OCI-LY7 (cell line): ENCODE measurements at regions of chr3 and their contacts with region 1.

Region 1: GRCh38 chr3:37974121-37975083 is 16.2 kb upstream of the VILL start:
- DNase-seq: peak; percentile 80
- H3K4me3 ChIP-seq: no peak overlapping the region
- H3K27ac ChIP-seq: no peak overlapping the region
- H3K4me1 ChIP-seq: no peaks in the 10 kb centered on the region
- CTCF ChIP-seq: peak; percentile 95

Region 2: GRCh38 chr3:38003371-38003816 is 29.0 kb after region 1 on chr3:
- CTCF ChIA-PET with region 1: no interaction called
- POLR2A ChIA-PET with region 1: no interaction called
- intact Hi-C with region 1: loop called (anchors 1 kb)
- DNase-seq: peak; percentile 54
- H3K4me3 ChIP-seq: no peak overlapping the region
- H3K27ac ChIP-seq: no peak overlapping the region
- H3K4me1 ChIP-seq: peaks cover 10% of the 10 kb centered on the region
- CTCF ChIP-seq: peak; percentile 88

Region 3: DNA sequence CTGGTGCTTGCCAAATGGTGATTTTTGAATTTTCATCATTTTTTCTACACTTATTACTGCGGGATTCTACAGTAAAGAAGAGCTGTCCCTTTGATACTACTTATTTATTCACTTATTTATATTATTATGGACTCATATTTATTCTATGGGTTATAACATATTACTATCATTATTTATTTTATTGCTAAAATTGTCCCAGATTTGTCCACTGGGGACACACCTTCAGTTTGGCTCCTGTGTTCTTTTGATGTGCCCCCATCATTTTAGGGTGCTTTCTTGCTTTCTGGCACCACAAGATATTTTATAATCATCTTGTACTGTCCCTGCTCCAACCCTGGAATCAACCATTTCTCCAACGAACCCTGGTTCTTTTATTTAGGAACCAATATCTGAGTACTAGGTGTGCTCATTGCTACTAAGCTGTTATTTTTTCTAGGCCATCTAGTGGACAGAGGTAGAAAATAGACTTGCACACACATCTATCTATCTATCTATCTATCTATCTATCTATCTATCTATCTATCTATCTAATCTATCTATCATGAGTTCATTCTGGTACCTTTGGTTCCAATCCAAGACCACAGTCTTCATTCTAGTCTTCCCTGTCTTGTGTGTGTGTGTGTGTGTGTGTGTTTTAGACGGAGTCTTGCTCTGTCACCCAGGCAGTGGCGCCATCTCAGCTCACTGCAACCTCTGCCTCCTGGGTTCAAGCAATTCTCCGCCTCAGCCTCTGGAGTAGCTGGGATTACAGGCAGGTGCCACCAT is 323.7 kb after region 1 on chr3:
- CTCF ChIA-PET with region 1: no interaction called
- POLR2A ChIA-PET with region 1: no interaction called
- intact Hi-C with region 1: loop called (anchors 5 kb)
- DNase-seq: peak; percentile 27
- H3K4me3 ChIP-seq: no peak overlapping the region
- H3K27ac ChIP-seq: no peak overlapping the region
- H3K4me1 ChIP-seq: no peaks in the 10 kb centered on the region
- CTCF ChIP-seq: peak; percentile 82